ENCODE measurements at regions of chr15 and their contacts with region 1.

Region 1: DNA sequence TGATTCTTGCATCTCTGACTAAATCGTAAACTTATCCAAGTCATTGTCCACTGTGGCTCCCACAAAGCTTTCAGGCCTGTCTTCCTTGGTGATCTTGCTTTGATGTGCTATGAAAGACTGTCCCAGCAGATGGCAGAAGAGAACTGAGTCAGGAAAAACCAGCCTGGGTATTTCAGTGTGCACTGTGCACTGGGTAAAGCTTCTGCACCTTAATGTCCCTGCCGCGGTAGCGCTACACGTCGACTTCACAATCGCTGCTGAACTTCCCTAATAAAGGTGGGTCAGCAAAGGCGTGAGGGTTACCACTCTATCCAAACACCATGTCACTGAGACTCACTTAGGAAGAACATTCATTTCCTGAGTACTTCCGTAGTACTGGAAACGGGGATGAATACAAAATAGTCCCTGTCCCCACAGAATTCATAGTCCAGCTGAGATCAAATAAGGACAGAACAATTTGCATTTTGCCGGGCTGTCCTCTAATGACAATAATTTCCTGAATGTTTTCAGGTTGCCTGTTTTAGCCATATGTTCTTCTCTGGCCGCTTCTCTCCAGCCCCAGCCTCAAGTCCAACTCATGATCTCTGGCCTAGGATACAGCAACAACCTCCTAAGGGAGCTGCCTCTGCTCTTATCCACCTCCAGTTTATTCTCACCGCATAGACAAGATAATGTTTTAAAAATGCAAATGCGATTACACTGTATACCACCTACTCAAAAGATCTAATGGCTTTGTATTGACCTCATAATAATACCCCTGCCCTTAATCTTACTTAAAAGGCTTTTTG is 83.6 kb upstream of the AKAP13 start:
- ATAC-seq: peak; percentile 96 to 100 (median 98)
- H3K4me3 ChIP-seq: no peak overlapping the region
- H3K27ac ChIP-seq: no peak overlapping the region
- H3K4me1 ChIP-seq: peaks cover 0 to 2% of the 10 kb centered on the region in 2 donors

Region 2: DNA sequence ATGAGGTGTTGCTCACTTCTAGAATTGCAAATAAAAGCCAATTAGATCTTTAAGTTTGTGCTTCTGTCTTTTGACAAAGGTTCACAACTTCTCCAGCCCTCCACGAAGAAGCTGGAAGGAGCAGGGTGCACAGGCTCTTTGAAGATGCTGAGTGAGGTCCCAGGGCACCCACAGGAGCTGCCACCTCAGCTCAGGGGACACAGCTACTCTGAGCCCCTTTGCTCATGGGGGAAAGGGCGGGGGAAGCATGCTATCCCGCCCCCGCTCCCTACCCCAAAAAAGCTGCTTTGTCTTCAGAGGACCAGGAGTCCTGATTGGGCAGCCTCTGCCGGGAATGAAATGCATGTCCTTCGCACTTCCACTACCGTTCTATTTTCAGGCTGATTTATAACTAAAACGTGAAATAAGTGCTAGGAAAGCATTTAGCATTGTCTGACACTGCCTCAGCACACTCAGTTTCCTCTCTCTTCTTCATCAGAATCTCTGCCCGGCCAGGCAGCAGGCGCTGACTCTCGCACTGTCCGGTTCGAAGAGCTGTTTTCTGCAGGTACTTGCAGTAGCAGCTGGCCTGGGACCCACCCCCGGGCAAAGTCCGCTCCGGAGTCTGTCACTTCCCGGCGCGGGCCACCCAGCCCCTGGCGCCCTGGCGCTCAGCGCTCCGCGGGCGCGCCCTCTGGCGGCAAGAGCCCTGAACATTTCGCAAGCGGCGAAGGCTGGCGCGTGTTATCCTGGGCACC is 543.4 kb after region 1 on chr15:
- in situ Hi-C with region 1: loop called in 3 of 9 experiments (anchors 25 kb)
- ATAC-seq: peak; percentile 84 to 99 (median 98)
- H3K4me3 ChIP-seq: peak overlapping the region; percentile 3 to 30 (median 17)
- H3K27ac ChIP-seq: no peak overlapping the region
- H3K4me1 ChIP-seq: peaks cover 0 to 4% of the 10 kb centered on the region in 2 donors

Measured in motor neuron (in vitro differentiated cells).